ENCODE measurements at regions of chr19 and their contacts with region 1.

Region 1: DNA sequence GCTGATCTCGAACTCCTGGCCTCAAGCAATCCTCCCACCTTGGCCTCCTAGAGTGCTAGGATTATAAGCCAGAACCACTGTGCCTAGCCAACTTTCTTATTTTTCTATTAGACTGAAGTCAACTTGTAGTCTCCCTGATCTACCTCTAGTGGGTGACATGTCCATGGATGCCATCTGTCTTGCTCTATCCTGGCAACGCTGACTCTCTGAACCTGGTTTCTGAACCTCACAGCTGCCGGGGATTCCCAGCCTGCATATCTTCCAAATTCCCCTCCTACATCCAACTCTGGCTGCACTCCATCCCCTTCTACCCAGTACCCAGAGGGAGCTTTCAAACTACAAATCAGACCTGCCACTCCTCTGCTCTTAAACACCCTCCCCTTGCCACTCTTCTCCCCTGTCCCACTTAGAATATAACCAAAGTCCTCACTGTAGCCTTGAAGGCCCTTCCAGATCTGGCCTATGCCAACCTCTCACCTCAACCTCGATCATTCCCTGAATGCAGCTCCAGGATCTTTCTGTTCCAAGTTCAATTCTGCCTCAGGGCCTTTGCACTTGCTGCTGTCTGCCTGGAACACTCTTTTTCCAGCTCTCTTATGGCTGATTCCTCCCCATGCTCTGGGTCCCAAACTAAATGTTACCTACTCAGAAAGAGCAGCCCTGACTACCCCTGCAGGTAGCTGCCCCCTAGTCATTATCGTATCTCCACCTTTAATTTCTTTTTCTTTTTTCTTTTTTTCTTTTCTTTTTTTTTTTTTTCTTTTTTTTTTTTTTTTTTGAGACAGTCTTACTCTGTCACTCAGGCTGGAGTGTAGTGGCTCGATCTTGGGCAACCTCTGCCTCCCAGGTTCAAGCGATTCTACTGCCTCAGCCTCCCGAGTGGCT is 2.2 kb downstream of the CLIP3 start:
- DNase-seq: peak; percentile 53
- H3K4me3 ChIP-seq: no peak overlapping the region
- H3K27ac ChIP-seq: no peak overlapping the region
- H3K4me1 ChIP-seq: no peaks in the 10 kb centered on the region
- H3K27me3 ChIP-seq: no peaks in the 10 kb centered on the region
- CTCF ChIP-seq: peak; percentile 33 to 70

Region 2: DNA sequence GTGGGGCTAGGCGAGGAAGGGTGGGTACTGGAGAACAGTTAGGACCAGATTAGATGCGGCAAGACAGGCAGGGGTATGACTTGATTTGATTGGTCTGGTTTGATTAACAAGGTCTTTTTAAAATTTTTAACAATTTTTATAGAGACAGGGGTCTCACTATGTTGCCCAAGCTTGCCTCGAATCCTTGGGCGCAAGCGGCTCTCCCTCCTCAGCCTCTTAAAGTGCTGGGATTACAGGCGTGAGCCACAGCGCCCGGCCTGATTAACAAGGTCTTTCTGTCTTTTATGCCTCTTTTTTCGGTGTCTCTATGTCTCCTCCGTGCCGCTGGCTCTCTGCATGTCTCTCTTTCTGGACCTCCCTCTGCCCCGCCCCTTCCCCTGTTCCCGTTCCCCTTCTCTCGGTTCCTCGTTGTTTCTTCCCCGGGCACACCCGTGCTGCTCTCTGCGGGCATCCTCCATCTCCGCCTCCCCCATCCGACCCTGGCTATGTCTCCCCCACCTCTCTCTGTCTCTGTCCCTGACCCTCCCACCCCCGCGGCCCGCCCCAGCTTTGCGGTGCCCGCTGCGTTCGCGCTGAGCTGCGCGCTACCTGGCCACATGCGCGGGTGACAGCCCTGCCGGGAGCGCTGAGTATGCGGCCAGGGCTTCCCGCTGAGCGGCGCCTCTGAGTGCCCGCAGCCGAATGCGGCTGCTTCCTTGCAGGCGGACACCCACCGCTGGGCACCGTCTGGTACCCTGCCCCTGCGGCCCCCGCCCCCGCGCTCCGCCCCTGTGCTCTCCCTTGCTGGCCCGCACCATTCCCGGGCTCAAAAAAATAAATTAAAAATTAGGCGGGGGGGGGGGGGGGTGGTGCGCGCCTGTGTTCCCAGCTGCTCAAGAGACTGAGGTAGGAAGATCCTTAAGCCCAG is 43.6 kb before region 1 on chr19:
- CTCF ChIA-PET with region 1: no interaction called
- dilution Hi-C with region 1: loop called (anchors 5 kb)
- in situ Hi-C with region 1: no loop called
- intact Hi-C with region 1: no loop called
- DNase-seq: no peak
- H3K4me3 ChIP-seq: peak overlapping the region in 1 of 3 experiments; percentile 9
- H3K27ac ChIP-seq: no peak overlapping the region
- H3K4me1 ChIP-seq: no peaks in the 10 kb centered on the region
- H3K27me3 ChIP-seq: peaks cover 9% of the 10 kb centered on the region
- CTCF ChIP-seq: no peak

Region 3: GRCh38 chr19:36081385-36081784 is 50.9 kb after region 1 on chr19:
- CTCF ChIA-PET with region 1: no interaction called
- dilution Hi-C with region 1: loop called (anchors 5 kb)
- in situ Hi-C with region 1: no loop called
- intact Hi-C with region 1: no loop called
- DNase-seq: no peak
- H3K4me3 ChIP-seq: no peak overlapping the region
- H3K27ac ChIP-seq: no peak overlapping the region
- H3K4me1 ChIP-seq: no peaks in the 10 kb centered on the region
- H3K27me3 ChIP-seq: no peaks in the 10 kb centered on the region
- CTCF ChIP-seq: no peak

Region 4: DNA sequence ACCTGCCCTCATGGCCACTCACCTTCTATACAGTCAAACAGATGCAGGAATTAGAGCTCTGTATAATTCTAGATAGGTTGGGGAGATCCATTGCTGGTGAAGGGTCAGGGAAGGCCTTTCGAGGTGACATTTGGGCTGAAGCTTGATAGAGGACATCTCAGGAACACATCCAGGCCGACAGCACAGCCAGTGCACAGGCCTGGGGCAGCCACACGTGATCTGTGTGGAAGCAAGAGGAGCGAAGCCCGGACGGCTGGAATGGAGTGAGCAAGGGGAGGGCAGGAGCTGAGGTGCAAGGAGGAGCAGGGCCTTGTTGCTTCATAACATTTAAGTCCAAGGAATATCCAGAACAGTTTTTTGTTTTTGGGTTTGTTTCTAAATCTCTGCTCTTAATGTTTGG is 75.9 kb after region 1 on chr19:
- CTCF ChIA-PET with region 1: no interaction called
- dilution Hi-C with region 1: loop called (anchors 5 kb)
- in situ Hi-C with region 1: no loop called
- intact Hi-C with region 1: no loop called
- DNase-seq: no peak
- H3K4me3 ChIP-seq: no peak overlapping the region
- H3K27ac ChIP-seq: no peak overlapping the region
- H3K4me1 ChIP-seq: peaks cover 19% of the 10 kb centered on the region
- H3K27me3 ChIP-seq: no peaks in the 10 kb centered on the region
- CTCF ChIP-seq: no peak